ENCODE measurements at regions of chr3 and their contacts with region 1.

Region 1: DNA sequence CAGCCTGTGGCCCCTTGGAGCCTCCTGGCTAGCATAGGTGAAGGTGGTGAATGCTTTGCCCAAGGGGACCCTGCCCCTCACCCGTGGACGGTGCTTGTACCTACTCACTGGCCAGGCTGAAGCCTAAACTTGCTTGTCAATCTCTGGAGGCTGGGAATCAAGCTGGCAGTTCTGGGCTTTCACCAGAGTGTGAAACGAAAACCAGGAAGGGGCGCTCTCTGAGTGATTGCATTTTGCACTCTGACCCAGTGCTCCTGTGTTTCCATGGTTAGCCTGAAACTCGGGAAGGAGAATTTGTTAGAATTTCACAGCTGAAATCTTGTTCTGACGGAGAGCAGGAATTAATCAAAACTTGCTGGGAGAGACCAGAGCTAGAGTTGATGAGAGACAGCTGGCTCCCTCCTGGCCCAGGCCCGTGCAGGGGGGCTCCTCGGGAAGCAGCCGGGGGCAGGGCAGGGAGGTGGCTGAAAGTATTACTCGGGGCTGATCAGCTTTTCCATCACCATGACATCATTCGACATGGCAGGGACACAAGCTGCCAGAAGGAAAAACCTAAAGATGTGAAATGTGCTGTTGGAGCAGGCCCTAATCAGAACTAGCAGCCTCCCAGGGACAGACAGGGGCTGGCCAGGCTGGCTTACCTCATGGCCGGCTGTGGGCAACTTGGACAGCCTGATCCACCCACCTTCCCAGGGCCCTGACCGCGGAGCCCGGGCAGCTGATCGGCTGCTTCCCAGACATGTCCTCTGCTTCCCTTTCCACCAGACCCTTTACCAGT is 323.6 kb upstream of the CTDSPL start:
- DNase-seq: peak in 2 of 5 donors; percentile 46 to 60
- ATAC-seq: peak in 3 of 4 donors; percentile 55 to 60 (median 56)
- H3K4me3 ChIP-seq: no peak overlapping the region
- H3K27ac ChIP-seq: peak overlapping the region in 10 of 12 donors; percentile 17 to 78 (median 61)
- H3K4me1 ChIP-seq: peaks cover 0 to 71% (median 25%) of the 10 kb centered on the region in 12 donors
- H3K27me3 ChIP-seq: no peaks in the 10 kb centered on the region
- CTCF ChIP-seq: no peak
- POLR2A ChIP-seq: no peak

Region 2: DNA sequence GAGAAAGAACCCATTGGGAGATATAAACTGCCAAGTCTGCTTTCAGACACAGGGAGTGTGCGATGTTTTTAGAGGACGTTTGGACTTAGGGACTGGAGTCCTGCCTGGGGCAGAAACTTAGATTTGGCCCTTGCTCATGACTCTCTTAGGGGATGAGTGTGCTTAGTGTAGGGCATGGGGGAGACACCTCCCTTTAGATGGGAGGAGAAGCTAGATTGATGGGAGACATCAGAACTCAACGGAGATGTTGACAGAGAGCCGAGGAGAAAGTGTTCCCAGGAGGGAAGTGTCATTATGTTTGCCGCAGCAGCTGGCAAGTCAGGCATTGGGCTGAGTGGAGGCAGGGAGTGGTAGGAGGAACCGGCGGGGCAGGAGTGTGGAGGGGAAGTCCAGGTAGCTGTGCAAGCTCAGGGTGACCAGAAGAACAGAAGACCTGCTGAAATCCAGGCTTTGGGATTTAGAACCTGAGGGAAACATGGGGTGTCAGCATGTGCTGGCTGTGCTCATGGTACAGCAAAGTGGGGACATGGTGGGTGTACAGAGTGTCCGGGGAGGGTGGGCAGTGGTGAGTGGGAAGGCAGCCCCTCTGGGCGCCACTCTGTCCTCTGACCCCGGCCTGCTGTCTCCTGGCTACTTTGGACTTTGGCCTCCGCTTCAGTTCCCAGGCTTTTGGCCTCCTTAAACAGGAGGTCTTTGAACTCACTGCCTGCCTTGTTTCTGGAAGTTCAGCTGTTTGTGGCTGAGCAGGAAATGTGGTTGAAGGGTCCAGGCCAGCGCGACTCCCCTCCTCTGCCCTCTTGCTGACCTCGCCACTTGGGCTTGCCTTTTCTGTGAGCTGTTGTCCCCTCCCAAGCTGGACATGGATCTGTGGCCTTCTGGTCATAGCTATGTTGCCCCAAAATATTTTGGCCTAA is 39.7 kb before region 1 on chr3:
- intact Hi-C with region 1: no loop called
- DNase-seq: peak in 2 of 5 donors; percentile 55 to 73
- ATAC-seq: peak; percentile 69 to 79 (median 76)
- H3K4me3 ChIP-seq: no peak overlapping the region
- H3K27ac ChIP-seq: peak overlapping the region in 10 of 12 donors; percentile 6 to 81 (median 56)
- H3K4me1 ChIP-seq: peaks cover under 1 to 72% (median 43%) of the 10 kb centered on the region in 12 donors
- H3K27me3 ChIP-seq: no peaks in the 10 kb centered on the region
- CTCF ChIP-seq: no peak
- POLR2A ChIP-seq: peak in 1 of 2 donors; percentile 17

Region 3: DNA sequence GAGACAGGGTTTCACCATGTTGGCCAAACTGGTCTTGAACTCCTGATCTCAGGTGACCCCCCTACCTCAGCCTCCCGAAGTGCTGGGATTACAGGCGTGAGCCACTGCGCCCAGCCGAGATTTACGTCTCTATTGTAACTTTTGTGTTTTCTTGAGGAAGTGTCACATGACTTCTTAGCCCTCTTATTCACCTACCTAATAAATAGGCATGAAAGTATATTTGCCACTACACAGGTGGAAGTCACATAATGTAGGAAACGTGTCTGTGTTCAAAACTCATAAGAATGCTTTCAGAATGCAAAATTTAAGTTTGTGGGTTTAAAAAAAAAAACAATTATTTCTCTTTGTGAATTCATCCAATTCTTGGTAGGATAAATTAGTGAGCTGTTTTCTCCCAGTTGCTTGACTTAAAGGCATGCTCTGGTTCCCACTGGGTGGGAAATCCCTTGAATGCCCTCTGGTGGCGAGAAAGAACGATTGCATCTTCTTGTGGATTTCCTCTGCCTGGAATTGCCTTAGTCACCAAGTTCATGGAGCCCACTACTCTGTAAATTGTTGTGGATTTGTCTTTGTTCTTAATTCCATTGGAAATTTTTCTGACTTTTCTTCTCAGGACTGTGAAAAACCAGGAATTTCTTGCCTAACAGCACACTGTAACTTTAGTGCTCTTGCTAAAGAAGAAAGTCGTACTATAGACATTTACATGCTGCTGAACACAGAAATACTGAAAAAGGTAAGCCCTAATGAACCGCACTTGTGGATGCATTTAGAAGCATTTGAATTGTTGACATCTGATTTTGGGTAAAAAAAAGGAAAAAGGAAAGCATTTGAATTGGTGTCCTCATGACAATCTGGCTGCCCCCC is 241.4 kb after region 1 on chr3:
- intact Hi-C with region 1: loop called in 1 of 10 experiments (anchors 10 kb)
- DNase-seq: peak in 2 of 5 donors; percentile 48 to 51
- ATAC-seq: peak; percentile 56 to 82 (median 74)
- H3K4me3 ChIP-seq: no peak overlapping the region
- H3K27ac ChIP-seq: peak overlapping the region in 2 of 12 donors; percentile 3 to 40
- H3K4me1 ChIP-seq: peaks cover 0 to 29% (median 3%) of the 10 kb centered on the region in 12 donors
- H3K27me3 ChIP-seq: no peaks in the 10 kb centered on the region
- CTCF ChIP-seq: peak; percentile 75 to 92 (median 84)
- POLR2A ChIP-seq: no peak

Measured in heart left ventricle (tissue), 16 donors.